ENCODE measurements at regions of chr17 and their contacts with region 1.

Region 1: DNA sequence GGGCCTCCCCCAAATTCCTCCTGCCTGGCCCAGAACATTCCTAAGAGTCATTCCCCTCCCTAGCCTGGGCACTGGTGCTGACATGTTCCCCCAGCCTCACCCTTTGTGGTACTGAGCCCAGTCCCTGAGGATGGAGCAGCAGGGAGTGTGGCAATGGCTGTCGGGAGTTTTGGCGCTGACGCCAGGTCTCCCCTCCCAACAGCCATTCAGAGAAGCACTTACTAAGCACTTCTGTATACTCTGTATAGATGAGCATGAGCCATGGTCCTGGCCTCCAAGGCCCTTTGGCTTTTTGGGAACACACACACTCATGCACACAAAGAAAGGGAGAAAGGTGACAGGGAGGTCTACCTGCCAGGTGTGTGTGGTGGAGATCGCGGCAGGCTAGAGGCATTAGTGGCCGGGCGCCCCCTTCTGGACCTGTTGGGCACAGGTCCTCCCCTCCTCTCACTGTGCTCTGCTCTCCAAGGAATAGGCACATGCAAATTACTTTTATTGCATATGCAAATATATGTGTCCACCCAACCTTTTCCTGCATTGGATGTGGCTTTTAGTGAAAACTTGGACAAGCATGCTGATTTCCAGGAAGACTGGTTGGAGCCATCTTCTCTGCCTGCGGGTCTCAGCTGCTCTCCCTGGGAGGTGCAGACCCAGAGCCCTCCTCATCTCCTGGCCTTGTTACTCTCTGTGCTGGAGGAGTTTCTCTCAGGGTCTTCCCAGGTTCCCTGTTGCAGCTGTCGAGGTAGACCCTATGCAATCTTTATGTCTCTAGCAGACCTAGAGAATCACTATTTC is 17.4 kb upstream of the C17orf107 start:
- DNase-seq: peak; percentile 74 to 79 (median 75)
- ATAC-seq: peak; percentile 89 to 94 (median 90)
- H3K4me3 ChIP-seq: no peak overlapping the region
- H3K27ac ChIP-seq: no peak overlapping the region
- H3K4me1 ChIP-seq: no peaks in the 10 kb centered on the region
- H3K27me3 ChIP-seq: no peaks in the 10 kb centered on the region
- CTCF ChIP-seq: peak; percentile 74 to 91 (median 84)
- POLR2A ChIP-seq: no peak

Region 2: GRCh38 chr17:4709794-4710692 is 171.9 kb before region 1 on chr17 and contains the start of gene ARRB2:
- intact Hi-C with region 1: loop called (anchors 10 kb)
- DNase-seq: peak; percentile 99
- ATAC-seq: peak; percentile 82 to 91 (median 84)
- H3K4me3 ChIP-seq: peak within 1 kb of the TSS; percentile 58 to 65 (median 58)
- H3K27ac ChIP-seq: peak within 1 kb of the TSS; percentile 74 to 89 (median 77)
- H3K4me1 ChIP-seq: peaks cover 0 to 31% (median 16%) of the 10 kb centered on the region in 4 donors
- H3K27me3 ChIP-seq: no peaks in the 10 kb centered on the region
- CTCF ChIP-seq: peak; percentile 66 to 78 (median 70)
- POLR2A ChIP-seq: peak; percentile 58
- total RNA-seq, gene ARRB2: 18.2 to 38.6 (median 23.9) TPM

Region 3: GRCh38 chr17:4789901-4790704 is 91.9 kb before region 1 on chr17:
- intact Hi-C with region 1: loop called in 1 of 2 experiments (anchors 5 kb)
- DNase-seq: peak; percentile 89 to 92 (median 91)
- ATAC-seq: peak; percentile 67 to 86 (median 78)
- H3K4me3 ChIP-seq: peak overlapping the region; percentile 68 to 84 (median 83)
- H3K27ac ChIP-seq: peak overlapping the region; percentile 84 to 96 (median 92)
- H3K4me1 ChIP-seq: peaks cover 0 to 25% (median 5%) of the 10 kb centered on the region in 4 donors
- H3K27me3 ChIP-seq: no peaks in the 10 kb centered on the region
- CTCF ChIP-seq: peak; percentile 64 to 96 (median 79)
- POLR2A ChIP-seq: peak; percentile 96

Region 4: GRCh38 chr17:4806777-4807604 is 75.0 kb before region 1 on chr17 and contains the start of gene PLD2:
- intact Hi-C with region 1: loop called in 1 of 2 experiments (anchors 5 kb)
- DNase-seq: peak; percentile 94 to 95 (median 94)
- ATAC-seq: peak; percentile 90 to 98 (median 94)
- H3K4me3 ChIP-seq: peak within 1 kb of the TSS; percentile 65 to 84 (median 76)
- H3K27ac ChIP-seq: peak within 1 kb of the TSS in 2 of 3 donors; percentile 66 to 76
- H3K4me1 ChIP-seq: peaks cover 0 to 12% (median 3%) of the 10 kb centered on the region in 4 donors
- H3K27me3 ChIP-seq: no peaks in the 10 kb centered on the region
- CTCF ChIP-seq: no peak
- POLR2A ChIP-seq: peak; percentile 62
- total RNA-seq, gene PLD2: 8.2 to 27.3 (median 10.8) TPM

Measured in right lobe of liver (tissue), 6 donors.